A549 (cell line): ENCODE measurements at regions of chr18 and their contacts with region 1.

Region 1: DNA sequence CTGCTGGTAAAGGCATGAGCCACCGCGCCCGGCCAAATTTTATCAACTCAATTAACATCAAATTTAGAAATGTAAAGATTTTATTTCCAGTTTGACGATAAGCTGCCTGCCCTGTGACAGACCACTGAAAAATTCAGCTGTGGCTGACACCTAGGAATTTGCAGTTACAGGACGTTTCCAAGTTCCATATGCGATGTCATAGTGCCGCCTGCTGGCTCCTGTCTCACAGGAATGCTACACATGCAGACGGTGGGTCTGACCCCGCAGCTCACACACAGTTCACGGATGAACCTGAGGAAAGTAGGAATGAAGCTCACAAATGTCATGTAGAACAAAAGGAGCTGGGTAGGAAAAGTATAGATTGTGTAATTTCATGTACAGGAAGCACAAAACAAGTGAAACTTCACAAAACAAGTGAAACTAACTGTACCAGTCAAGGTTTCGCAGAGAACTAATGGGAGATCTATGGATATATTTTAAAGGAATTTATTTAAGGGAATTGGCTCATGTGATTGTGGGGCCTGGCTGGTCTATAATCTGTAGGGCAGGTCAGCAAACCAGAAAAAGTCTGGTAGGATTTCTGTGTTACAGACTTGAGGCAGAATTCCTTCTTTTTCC is 13.2 kb upstream of the SEH1L start:
- DNase-seq: peak; percentile 67 to 77
- ATAC-seq: peak; percentile 95 to 98
- H3K4me3 ChIP-seq: no peak overlapping the region
- H3K27ac ChIP-seq: peak overlapping the region in 1 of 2 experiments; percentile 54; a peak in 2 of 6 replicates
- H3K4me1 ChIP-seq: 0 out of 3 replicates have a peak, but pooled peaks cover 4% of the 10 kb centered on the region
- CTCF ChIP-seq: peak; percentile 83
- EP300 ChIP-seq: no peak
- POLR2A ChIP-seq: no peak
- RAD21 ChIP-seq: peak; percentile 95 to 98

Region 2: GRCh38 chr18:12606592-12607315 is 327.8 kb before region 1 on chr18:
- CTCF ChIA-PET with region 1: no interaction called
- POLR2A ChIA-PET with region 1: no interaction called
- DNase-seq: peak in 1 of 2 experiments; percentile 50
- ATAC-seq: peak; percentile 59 to 75
- H3K4me3 ChIP-seq: no peak overlapping the region
- H3K27ac ChIP-seq: peak overlapping the region; percentile 83 to 91
- H3K4me1 ChIP-seq: peaks cover 41% of the 10 kb centered on the region
- CTCF ChIP-seq: no peak
- EP300 ChIP-seq: peak; percentile 20 to 31; a peak in 1 of 5 replicates
- POLR2A ChIP-seq: no peak
- RAD21 ChIP-seq: no peak

Region 3: DNA sequence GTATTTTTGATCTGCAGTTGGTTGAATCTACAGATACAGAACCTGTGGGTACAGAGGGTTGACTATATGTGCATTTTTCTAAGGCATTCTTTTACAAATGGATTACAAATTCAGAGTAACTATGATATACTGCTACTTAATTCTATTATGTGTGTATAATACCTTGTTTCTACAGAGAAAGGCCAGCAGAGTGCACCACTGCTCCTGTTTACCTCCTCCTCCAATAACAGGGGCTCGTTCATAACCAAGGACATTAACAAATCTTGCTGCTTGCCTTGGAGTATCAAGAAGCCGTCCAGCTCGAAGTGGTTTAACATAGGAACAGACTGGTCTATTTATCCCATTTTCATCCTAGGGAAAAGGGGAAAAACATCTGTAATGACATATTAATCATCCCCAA is 248.5 kb before region 1 on chr18:
- CTCF ChIA-PET with region 1: interaction called, 12 read pairs
- POLR2A ChIA-PET with region 1: no interaction called
- DNase-seq: peak in 1 of 2 experiments; percentile 55
- ATAC-seq: peak; percentile 84 to 85
- H3K4me3 ChIP-seq: no peak overlapping the region
- H3K27ac ChIP-seq: no peak overlapping the region
- H3K4me1 ChIP-seq: no peaks in the 10 kb centered on the region
- CTCF ChIP-seq: peak; percentile 38; the same call in 2 of the 3 replicates
- EP300 ChIP-seq: no peak
- POLR2A ChIP-seq: no peak
- RAD21 ChIP-seq: peak; percentile 27 to 41; a peak in 3 of 5 replicates

Region 4: DNA sequence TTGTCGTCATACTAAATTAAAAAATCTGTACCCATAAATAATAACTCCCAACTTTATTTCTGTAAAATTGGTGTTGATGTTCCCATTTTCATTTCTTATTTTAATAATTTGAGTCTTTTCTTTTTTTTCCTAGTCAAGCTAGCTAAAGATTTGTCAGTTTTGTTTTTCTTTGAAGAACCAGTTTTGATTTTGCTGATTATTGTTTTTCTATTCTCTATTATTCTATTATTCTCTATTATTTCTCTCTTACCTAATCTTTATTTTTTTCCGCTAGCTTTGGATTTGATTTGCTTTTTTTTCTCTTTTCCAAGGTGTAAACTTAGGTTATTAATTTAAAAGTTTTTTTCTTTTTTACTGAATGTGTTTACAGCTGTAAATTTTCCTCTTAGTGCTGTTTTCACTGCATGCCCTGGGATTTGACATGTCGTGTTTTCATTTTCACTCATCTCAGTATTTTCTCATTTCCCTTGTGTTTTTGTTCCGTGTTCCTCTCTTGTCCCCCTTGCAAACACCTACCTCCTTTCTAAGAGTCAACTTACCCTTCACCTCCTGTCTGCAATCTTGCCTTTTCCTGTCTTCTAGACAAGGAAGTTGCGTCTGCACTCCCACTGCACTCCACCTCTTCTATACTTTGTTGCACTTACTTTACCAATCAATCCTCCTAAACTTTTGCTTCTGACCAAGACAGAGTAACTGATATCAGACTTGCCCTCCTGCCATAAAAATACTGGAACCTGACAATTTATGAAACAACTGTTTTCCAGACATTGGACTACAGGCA is 212.9 kb before region 1 on chr18:
- CTCF ChIA-PET with region 1: interaction called, 159 read pairs
- POLR2A ChIA-PET with region 1: no interaction called
- DNase-seq: no peak
- ATAC-seq: no peak
- H3K4me3 ChIP-seq: no peak overlapping the region
- H3K27ac ChIP-seq: no peak overlapping the region
- H3K4me1 ChIP-seq: no peaks in the 10 kb centered on the region
- CTCF ChIP-seq: no peak
- EP300 ChIP-seq: no peak
- POLR2A ChIP-seq: no peak
- RAD21 ChIP-seq: no peak

Region 5: GRCh38 chr18:12737243-12737902 is 197.2 kb before region 1 on chr18:
- CTCF ChIA-PET with region 1: interaction called, 159 read pairs
- POLR2A ChIA-PET with region 1: interaction called, 4 read pairs
- DNase-seq: no peak
- ATAC-seq: no peak
- H3K4me3 ChIP-seq: no peak overlapping the region
- H3K27ac ChIP-seq: peak overlapping the region in 1 of 2 experiments; percentile 67; a peak in 3 of 6 replicates
- H3K4me1 ChIP-seq: peaks cover 18% of the 10 kb centered on the region
- CTCF ChIP-seq: no peak
- EP300 ChIP-seq: no peak
- POLR2A ChIP-seq: no peak
- RAD21 ChIP-seq: peak in 1 of 2 experiments; percentile 21; a peak in 1 of 5 replicates

Region 6: DNA sequence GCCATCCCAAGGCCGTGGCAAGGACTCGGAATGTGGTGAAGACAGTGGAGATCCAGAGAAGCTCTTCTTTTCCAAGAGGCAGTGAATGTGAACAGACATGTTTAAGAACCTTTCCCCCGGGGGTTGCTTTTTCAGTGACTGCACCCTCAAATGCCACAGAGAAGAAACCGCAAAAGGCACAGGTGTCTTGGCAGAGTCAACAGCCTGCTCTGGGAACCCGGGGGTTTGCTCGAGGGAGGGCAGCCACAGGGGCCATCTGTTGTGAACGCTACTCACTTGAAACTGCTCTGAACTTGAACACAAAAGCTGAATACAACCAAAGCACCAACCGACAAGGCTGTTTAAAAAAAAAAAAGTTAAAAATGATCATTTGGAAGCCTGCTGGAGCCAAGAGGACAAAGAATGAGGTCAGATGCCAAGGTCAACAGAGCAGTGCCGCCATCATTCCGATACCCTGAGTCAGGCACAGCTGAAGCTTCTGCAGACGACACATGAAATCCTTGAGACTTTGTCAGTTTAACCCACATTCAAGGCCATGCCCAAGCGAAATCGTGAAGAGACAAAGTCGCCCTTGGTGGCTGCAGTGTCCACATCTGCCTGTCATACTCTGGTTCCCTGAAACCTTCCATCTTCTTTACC is 184.4 kb before region 1 on chr18:
- CTCF ChIA-PET with region 1: interaction called, 83 read pairs
- POLR2A ChIA-PET with region 1: no interaction called
- DNase-seq: no peak
- ATAC-seq: no peak
- H3K4me3 ChIP-seq: no peak overlapping the region
- H3K27ac ChIP-seq: no peak overlapping the region
- H3K4me1 ChIP-seq: no peaks in the 10 kb centered on the region
- CTCF ChIP-seq: no peak
- EP300 ChIP-seq: no peak
- POLR2A ChIP-seq: no peak
- RAD21 ChIP-seq: no peak

Region 7: DNA sequence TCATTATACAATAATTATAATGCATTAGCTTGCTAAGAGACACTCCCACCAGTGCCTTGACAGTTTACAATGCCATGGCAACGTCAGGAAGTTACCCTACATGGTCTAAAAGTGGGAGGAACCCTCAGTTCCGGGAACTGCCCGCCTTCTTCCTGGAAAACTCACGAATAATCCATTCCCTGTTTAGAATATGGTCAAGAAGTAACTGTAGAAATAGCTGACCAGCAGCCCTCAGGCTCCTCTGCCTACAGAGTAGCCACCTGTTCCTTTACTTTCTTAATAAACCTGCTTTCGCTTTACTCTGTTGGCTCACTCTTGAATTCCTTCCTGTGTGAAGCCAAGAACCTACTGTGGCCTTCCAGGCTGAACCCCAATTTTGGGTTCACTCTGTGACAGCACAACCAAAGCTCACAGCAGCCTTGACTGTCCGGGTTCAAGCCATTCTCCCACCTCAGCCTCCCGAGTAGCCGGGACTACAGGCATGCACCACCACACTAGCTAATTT is 30.5 kb before region 1 on chr18:
- CTCF ChIA-PET with region 1: interaction called, 10 read pairs
- POLR2A ChIA-PET with region 1: no interaction called
- DNase-seq: no peak
- ATAC-seq: no peak
- H3K4me3 ChIP-seq: no peak overlapping the region
- H3K27ac ChIP-seq: no peak overlapping the region
- H3K4me1 ChIP-seq: no peaks in the 10 kb centered on the region
- CTCF ChIP-seq: no peak
- EP300 ChIP-seq: no peak
- POLR2A ChIP-seq: no peak
- RAD21 ChIP-seq: no peak

Region 8: GRCh38 chr18:12947355-12948041 is 12.9 kb after region 1 on chr18 and contains the start of gene SEH1L:
- CTCF ChIA-PET with region 1: interaction called, 36 read pairs
- POLR2A ChIA-PET with region 1: interaction called, 4 read pairs
- DNase-seq: peak; percentile 61 to 98
- ATAC-seq: peak; percentile 88 to 94
- H3K4me3 ChIP-seq: peak within 1 kb of the TSS; percentile 85
- H3K27ac ChIP-seq: peak within 1 kb of the TSS; percentile 90 to 92
- H3K4me1 ChIP-seq: peaks cover 7% of the 10 kb centered on the region
- CTCF ChIP-seq: no peak
- EP300 ChIP-seq: no peak
- POLR2A ChIP-seq: peak; percentile 54
- RAD21 ChIP-seq: no peak
- polyA plus RNA-seq, gene SEH1L: 63.1 and 70.6 TPM in 2 replicates

Region 9: GRCh38 chr18:12958478-12958877 is 23.9 kb after region 1 on chr18:
- CTCF ChIA-PET with region 1: no interaction called
- POLR2A ChIA-PET with region 1: no interaction called
- DNase-seq: no peak
- ATAC-seq: no peak
- H3K4me3 ChIP-seq: no peak overlapping the region
- H3K27ac ChIP-seq: no peak overlapping the region
- H3K4me1 ChIP-seq: no peaks in the 10 kb centered on the region
- CTCF ChIP-seq: no peak
- EP300 ChIP-seq: no peak
- POLR2A ChIP-seq: no peak
- RAD21 ChIP-seq: no peak

Region 10: DNA sequence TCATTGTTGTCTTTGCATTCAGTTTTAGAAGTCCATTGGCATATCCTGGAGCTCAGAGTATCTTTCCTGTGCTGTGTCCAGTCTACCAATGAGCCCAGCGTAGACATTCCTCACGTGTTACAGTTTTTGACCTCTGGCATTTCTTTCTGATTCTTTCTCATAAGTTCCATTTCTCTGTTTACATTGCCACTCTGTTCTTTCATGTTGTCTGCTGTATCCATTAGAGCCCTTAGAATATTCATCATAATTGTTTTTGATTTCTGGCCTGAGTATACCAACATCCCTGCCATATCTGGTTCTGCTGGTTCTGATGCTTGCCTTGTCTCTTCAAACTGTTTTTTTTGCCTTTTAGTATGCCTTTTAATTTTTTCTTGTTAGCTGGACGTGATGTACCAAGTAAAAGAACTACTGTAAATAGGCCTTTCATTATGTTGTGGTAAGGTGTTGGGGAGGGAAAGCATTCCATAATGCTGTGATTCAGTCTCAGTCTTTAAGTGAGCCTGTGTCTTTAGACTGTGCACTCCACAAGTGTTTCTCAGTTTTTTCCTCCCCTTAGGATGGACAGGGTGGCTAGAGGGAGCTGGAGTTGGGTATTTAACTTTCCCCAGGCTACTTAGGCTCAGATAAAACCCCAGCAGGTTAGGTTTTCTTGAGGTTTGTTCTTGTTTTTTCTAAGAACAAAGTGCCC is 92.2 kb after region 1 on chr18:
- CTCF ChIA-PET with region 1: no interaction called
- POLR2A ChIA-PET with region 1: no interaction called
- DNase-seq: no peak
- ATAC-seq: no peak
- H3K4me3 ChIP-seq: no peak overlapping the region
- H3K27ac ChIP-seq: no peak overlapping the region
- H3K4me1 ChIP-seq: no peaks in the 10 kb centered on the region
- CTCF ChIP-seq: no peak
- EP300 ChIP-seq: no peak
- POLR2A ChIP-seq: no peak
- RAD21 ChIP-seq: no peak